ENCODE measurements at regions of chr7 and their contacts with region 1.

Region 1: DNA sequence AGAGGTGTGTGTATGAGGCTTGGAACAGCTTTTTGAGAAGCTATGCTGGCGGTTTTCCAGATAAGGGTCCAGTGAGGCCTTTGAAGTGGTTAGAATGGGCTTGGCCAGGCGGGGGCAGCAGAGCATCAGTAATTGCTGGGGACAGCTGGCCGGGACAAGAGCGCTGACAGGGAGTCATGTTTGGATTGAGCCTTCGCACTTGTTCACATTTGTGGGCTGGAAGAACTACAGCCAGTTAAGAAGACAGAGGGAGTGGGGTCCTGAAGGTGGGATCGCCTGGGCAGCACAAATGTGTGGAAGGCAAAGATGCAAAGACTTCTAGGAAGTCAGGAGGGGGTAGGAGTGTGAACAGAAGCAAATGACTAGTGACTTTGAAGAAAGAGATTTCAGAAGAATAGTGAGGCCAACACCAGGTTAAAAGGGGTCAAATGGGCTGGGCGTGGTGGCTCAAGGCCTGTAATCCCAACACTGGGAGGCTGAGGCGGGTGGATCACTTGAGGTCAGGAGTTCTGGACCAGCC is 12.7 kb upstream of the SDHAF3 start:
- DNase-seq: peak; percentile 82
- ATAC-seq: peak; percentile 92
- H3K4me3 ChIP-seq: no peak overlapping the region
- H3K4me3 Mint-ChIP-seq: no peak overlapping the region
- H3K27ac ChIP-seq: no peak overlapping the region
- H3K27ac Mint-ChIP-seq: no peak overlapping the region
- H3K4me1 ChIP-seq: peaks cover 3% of the 10 kb centered on the region in 2 donors
- H3K4me1 Mint-ChIP-seq: no peaks in the 10 kb centered on the region
- H3K27me3 ChIP-seq: peaks cover 0 to 7% (median 3%) of the 10 kb centered on the region in 4 experiments
- H3K27me3 Mint-ChIP-seq: peaks cover 27% of the 10 kb centered on the region
- CTCF ChIP-seq: peak; percentile 92

Region 2: GRCh38 chr7:97094284-97094930 is 10.4 kb before region 1 on chr7:
- CTCF ChIA-PET with region 1: interaction called, 12 read pairs
- POLR2A ChIA-PET with region 1: no interaction called
- intact Hi-C with region 1: no loop called
- DNase-seq: no peak
- ATAC-seq: no peak
- H3K4me3 ChIP-seq: no peak overlapping the region
- H3K4me3 Mint-ChIP-seq: no peak overlapping the region
- H3K27ac ChIP-seq: no peak overlapping the region
- H3K27ac Mint-ChIP-seq: no peak overlapping the region
- H3K4me1 ChIP-seq: no peaks in the 10 kb centered on the region
- H3K4me1 Mint-ChIP-seq: no peaks in the 10 kb centered on the region
- H3K27me3 ChIP-seq: no peaks in the 10 kb centered on the region
- H3K27me3 Mint-ChIP-seq: peaks cover 24% of the 10 kb centered on the region
- CTCF ChIP-seq: no peak

Region 3: DNA sequence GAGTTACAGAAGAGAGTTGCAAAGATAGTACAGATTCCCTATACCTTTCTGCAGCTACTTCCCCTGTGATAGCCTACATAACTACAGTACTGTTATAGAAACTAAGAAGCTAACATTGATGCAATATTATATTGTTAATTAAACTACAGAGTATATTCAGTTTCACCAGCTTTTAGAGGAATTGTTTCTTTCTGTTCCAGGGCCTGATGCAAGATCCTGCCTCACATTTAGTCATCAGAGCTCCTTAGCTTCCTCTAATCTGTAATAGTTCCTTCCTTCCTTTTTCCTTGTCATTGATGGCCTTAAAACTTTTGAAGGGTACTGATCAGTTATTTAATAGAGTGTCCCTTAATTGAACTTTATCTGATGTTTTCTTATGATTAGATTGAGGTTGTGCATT is 69.5 kb after region 1 on chr7:
- CTCF ChIA-PET with region 1: interaction called, 41 read pairs
- POLR2A ChIA-PET with region 1: no interaction called
- intact Hi-C with region 1: loop called (anchors 1 kb)
- DNase-seq: no peak
- ATAC-seq: no peak
- H3K4me3 ChIP-seq: no peak overlapping the region
- H3K4me3 Mint-ChIP-seq: no peak overlapping the region
- H3K27ac ChIP-seq: no peak overlapping the region
- H3K27ac Mint-ChIP-seq: no peak overlapping the region
- H3K4me1 ChIP-seq: no peaks in the 10 kb centered on the region
- H3K4me1 Mint-ChIP-seq: no peaks in the 10 kb centered on the region
- H3K27me3 ChIP-seq: no peaks in the 10 kb centered on the region
- H3K27me3 Mint-ChIP-seq: no peaks in the 10 kb centered on the region
- CTCF ChIP-seq: no peak

Region 4: GRCh38 chr7:97179454-97180104 is 74.8 kb after region 1 on chr7:
- CTCF ChIA-PET with region 1: interaction called, 41 read pairs
- POLR2A ChIA-PET with region 1: no interaction called
- intact Hi-C with region 1: loop called (anchors 1 kb)
- DNase-seq: peak; percentile 66
- ATAC-seq: peak; percentile 51
- H3K4me3 ChIP-seq: no peak overlapping the region
- H3K4me3 Mint-ChIP-seq: no peak overlapping the region
- H3K27ac ChIP-seq: no peak overlapping the region
- H3K27ac Mint-ChIP-seq: no peak overlapping the region
- H3K4me1 ChIP-seq: no peaks in the 10 kb centered on the region
- H3K4me1 Mint-ChIP-seq: peaks cover 4% of the 10 kb centered on the region
- H3K27me3 ChIP-seq: no peaks in the 10 kb centered on the region
- H3K27me3 Mint-ChIP-seq: no peaks in the 10 kb centered on the region
- CTCF ChIP-seq: peak; percentile 86

Region 5: DNA sequence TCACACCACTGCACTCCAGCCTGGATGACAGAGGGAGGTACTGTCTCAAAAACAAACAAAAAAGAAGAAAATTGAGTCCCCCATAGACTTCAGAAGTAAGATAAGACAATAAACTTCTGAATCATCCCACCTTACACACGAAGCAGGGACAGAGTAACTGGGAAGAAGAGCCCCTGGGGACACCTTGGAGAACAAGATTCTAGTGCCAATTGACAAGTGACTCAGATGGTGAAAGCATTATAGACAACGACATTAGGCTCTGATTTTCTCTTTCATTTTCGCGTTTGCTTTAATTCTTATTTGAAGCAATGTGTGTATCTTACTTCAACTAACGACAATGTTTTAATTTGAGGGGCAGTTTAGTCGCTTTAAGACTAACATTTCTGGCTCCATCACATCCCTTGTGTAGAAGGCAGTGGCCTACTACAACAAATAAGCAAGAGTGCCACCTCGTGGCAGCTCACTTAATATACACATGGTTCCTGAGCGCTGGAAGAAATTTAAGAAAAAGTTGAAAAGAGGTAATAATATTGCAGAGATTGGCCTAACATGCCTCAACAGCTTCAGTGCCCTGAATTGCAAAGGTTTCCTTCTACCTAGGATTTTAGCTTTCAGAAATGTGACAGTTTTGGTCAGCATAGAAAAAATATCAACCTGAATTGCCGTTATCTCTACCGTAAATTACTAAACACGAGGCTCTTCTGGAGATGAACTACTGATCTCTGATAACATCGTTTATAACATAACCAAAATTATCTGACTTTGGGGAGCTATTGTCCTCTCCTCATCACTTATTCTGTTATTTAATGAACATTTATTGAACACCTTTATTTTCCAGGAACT is 730.7 kb after region 1 on chr7:
- CTCF ChIA-PET with region 1: interaction called, 60 read pairs
- POLR2A ChIA-PET with region 1: no interaction called
- intact Hi-C with region 1: loop called (anchors 1 kb)
- DNase-seq: peak; percentile 68
- ATAC-seq: peak; percentile 51
- H3K4me3 ChIP-seq: no peak overlapping the region
- H3K4me3 Mint-ChIP-seq: no peak overlapping the region
- H3K27ac ChIP-seq: no peak overlapping the region
- H3K27ac Mint-ChIP-seq: no peak overlapping the region
- H3K4me1 ChIP-seq: no peaks in the 10 kb centered on the region
- H3K4me1 Mint-ChIP-seq: no peaks in the 10 kb centered on the region
- H3K27me3 ChIP-seq: peaks cover 0 to 4% (median 3%) of the 10 kb centered on the region in 4 experiments
- H3K27me3 Mint-ChIP-seq: peaks cover 47% of the 10 kb centered on the region
- CTCF ChIP-seq: peak; percentile 92

Measured in B cell (primary cell).